Caco-2 (cell line): ENCODE measurements at regions of chr3 and their contacts with region 1.

Region 1: DNA sequence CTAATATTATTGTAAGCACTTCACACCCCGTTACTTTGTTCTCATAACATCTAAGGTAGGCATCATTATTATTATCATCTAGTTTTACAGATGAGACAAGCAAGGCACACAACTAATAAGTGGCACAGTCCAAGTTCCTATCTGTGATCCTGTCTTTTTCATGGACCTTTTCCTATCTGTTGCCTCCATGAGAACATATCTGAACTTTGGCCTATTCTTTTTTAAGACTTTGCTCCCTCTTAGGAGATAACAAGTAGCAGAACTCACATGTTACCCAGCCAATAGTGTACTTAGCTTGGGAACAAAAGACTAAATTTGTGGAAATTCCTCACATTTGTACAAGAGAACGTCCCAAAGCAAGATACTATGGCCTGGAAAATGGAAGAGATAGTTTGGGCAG is 172.4 kb downstream of the TIGIT start:
- DNase-seq: no peak
- H3K4me3 ChIP-seq: no peak overlapping the region
- H3K4me3 Mint-ChIP-seq: no peak overlapping the region
- H3K27ac Mint-ChIP-seq: peak overlapping the region; percentile 62
- H3K4me1 ChIP-seq: peaks cover 39% of the 10 kb centered on the region
- H3K4me1 Mint-ChIP-seq: peaks cover 20% of the 10 kb centered on the region
- H3K27me3 ChIP-seq: no peaks in the 10 kb centered on the region
- H3K27me3 Mint-ChIP-seq: no peaks in the 10 kb centered on the region
- CTCF ChIP-seq: no peak

Region 2: DNA sequence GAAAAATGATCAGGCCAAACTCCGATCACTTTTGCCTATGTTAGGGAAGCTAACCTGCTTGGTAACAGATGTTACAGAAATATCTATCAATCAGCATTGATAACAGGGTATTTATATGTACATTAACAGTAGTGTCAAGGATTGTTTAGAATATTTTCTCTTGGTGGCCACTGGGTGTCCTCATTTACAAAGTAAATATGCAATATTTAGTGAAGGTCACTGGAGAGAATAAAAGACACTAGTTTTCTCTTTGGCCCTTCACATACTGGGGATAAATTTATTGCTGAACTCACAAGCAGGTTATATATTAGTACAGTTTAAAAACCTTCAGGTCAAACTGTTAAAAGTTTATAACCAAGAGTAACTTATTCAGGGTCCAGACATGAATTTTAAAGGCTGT is 103.4 kb before region 1 on chr3:
- CTCF ChIA-PET with region 1: no interaction called
- POLR2A ChIA-PET with region 1: no interaction called
- intact Hi-C with region 1: no loop called
- DNase-seq: peak in 1 of 2 experiments; percentile 13
- H3K4me3 ChIP-seq: no peak overlapping the region
- H3K4me3 Mint-ChIP-seq: no peak overlapping the region
- H3K27ac Mint-ChIP-seq: peak overlapping the region; percentile 72
- H3K4me1 ChIP-seq: no peaks in the 10 kb centered on the region
- H3K4me1 Mint-ChIP-seq: peaks cover 11% of the 10 kb centered on the region
- H3K27me3 ChIP-seq: no peaks in the 10 kb centered on the region
- H3K27me3 Mint-ChIP-seq: no peaks in the 10 kb centered on the region
- CTCF ChIP-seq: peak; percentile 36 to 42

Region 3: DNA sequence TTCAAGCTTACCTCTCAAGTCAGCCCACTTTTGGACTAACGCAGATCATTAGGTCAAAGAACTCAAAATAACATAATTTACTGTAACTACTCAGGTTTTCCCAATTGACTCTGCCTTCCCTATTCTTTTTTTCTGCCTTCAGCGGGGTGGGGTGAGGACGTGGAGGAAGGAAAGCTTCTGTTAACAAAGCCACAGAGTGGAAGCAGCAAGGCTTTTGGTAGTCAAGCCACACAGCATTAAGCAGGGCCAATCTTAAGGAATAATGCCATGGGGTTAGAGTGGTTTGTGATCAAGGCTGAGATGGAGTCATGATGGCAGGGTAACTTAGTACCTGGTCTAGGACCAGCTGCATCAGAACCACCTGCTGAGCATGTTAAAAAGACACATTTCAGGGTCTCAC is 105.1 kb after region 1 on chr3:
- CTCF ChIA-PET with region 1: no interaction called
- POLR2A ChIA-PET with region 1: no interaction called
- intact Hi-C with region 1: loop called (anchors 5 kb)
- DNase-seq: no peak
- H3K4me3 ChIP-seq: no peak overlapping the region
- H3K4me3 Mint-ChIP-seq: no peak overlapping the region
- H3K27ac Mint-ChIP-seq: no peak overlapping the region
- H3K4me1 ChIP-seq: no peaks in the 10 kb centered on the region
- H3K4me1 Mint-ChIP-seq: no peaks in the 10 kb centered on the region
- H3K27me3 ChIP-seq: no peaks in the 10 kb centered on the region
- H3K27me3 Mint-ChIP-seq: no peaks in the 10 kb centered on the region
- CTCF ChIP-seq: no peak

Region 4: DNA sequence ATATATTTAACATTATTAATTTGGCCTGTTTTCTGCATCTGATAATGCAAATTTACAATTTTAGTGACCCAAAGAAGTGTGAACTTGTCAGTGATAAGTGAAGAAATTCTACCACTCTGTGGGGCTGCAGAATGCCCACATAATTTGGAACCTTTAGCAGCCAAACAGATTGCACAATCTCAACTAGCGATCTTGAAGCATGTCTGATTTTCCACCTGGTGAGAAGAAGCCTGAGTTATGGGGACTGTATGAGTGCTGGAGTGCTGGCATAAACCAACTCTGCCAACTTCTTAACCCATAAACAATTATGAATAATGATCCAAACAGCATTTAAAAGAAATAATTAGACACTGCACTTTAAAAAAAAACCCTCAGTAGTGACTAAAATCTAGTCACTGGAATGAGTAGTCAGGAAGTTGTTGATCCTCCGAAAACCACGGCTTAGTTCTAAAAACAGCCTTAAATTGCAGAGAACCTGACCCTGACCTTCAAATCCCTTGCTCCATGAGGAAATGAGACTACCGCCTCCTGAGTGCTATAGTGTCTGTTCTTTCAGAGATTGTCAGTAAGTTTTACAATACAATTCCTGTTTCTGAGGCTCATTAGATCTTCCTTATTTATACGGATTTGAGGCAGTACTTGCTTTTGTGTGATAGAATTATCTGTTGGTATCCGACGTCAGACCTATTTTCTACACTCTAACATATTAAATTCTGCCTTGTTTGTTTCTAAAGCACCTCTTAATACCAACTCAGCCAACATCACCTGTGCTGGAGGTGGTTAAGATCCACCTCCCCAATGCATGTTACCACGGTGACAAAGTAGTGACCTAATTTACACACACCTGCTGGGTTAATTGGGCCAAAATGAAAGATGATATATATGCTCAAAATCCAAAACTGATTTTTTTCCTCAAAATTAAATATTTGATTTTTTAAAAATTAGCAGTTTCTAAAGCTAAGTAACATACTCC is 413.1 kb after region 1 on chr3:
- CTCF ChIA-PET with region 1: no interaction called
- POLR2A ChIA-PET with region 1: no interaction called
- intact Hi-C with region 1: no loop called
- DNase-seq: no peak
- H3K4me3 ChIP-seq: no peak overlapping the region
- H3K4me3 Mint-ChIP-seq: no peak overlapping the region
- H3K27ac Mint-ChIP-seq: no peak overlapping the region
- H3K4me1 ChIP-seq: no peaks in the 10 kb centered on the region
- H3K4me1 Mint-ChIP-seq: no peaks in the 10 kb centered on the region
- H3K27me3 ChIP-seq: no peaks in the 10 kb centered on the region; the same call in 1 of the 2 replicates
- H3K27me3 Mint-ChIP-seq: no peaks in the 10 kb centered on the region
- CTCF ChIP-seq: no peak